Activated T-helper 1 cell treated with anti-CD3 and anti-CD28 coated beads, Interleukin-12 subunit alpha, Interleukin-12 subunit beta, Interleukin-2, Interleukin-4 antibody, amounts not matched to agents 30 ng/mL and 10 ng/mL and 1 ng/mL, durations not matched to agents 14 hours and 24 hours and 36 hours (primary cell): ENCODE measurements at regions of chr13 and their contacts with region 1.

Region 1: DNA sequence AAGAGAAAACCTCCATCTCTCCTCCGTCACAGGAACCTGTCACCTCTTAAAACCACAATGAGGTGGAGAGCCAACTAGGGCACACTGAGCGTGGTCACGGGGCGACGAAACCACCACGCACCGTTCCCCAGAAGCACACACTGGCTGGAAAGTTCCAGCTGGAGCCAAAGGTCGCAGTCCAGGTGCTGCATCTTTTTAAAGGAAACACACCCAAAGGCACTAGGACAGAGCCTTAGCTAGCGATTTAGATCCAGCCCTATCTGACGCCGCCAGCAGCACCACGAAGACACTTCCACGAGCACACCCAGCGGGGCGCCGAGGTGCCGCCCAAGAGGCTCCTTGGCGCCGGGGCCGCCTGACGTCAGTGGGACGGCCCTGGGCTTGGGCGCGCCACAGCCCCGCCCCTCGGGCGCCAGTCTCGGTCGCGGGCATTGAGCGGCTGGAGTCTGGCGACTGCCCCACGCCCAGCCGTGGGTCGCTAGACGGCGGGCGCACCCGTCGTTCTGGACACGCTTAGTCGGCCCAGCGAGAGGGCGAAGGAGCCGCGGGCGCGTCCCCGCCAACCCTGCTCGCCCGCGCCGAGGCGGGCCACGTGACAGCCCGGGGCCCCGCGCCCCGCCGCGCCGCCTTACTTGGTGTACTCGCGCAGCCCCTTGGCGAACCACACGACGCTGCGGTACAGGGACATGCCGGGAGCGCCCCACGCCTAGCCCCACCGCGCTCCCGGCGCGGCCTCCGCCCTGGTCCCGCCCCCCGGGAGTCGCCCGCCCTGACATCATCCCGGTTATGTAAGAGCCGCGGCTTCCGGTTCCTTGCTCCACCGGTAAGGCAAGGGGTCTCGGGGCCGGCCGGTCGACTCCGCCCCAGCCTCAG is at the start of gene DHRS12:
- DNase-seq: peak; percentile 79
- H3K4me3 Mint-ChIP-seq: peak within 1 kb of the TSS; percentile 90
- H3K27ac Mint-ChIP-seq: peak within 1 kb of the TSS; percentile 99
- H3K4me1 Mint-ChIP-seq: peaks cover 49% of the 10 kb centered on the region
- H3K27me3 Mint-ChIP-seq: no peaks in the 10 kb centered on the region
- total RNA-seq, gene DHRS12: 3.3 and 3.5 TPM in 2 replicates

Region 2: DNA sequence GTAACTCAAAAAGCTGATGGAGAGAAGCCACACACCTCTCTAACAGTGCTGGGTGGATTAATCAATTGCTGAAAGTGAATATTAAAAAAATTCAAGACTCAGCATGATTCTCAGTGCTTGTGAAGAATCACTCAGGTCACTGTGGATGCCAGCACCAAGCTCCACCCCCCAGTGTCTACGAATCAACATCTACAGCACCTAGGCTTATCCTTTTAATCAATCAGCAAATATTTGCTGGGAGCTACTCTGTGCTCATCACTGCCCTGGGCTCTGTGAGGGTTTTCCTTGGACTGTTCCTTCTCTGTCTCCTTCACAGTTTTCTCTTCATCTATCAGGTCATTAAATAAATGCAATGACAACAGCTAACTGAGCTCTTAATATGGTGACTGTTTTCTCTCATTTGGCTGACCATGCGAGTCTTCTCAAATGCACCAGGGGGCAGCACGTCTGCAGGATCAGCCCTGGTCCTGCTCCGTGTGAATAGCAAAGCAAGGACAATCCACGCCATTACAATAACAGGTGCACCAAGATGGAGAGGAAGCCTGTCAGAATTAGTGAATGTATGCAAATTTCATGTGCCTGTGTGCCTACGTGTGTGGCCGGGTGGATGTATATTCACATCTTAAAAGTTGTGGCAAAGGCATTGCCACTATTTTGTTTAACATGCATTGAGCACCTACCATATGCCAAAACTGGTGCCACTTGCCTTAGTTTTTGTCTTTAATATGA is 678.0 kb before region 1 on chr13:
- intact Hi-C with region 1: loop called (anchors 1 kb)
- DNase-seq: peak; percentile 25
- H3K4me3 Mint-ChIP-seq: no peak overlapping the region
- H3K27ac Mint-ChIP-seq: no peak overlapping the region
- H3K4me1 Mint-ChIP-seq: peaks cover 12% of the 10 kb centered on the region
- H3K27me3 Mint-ChIP-seq: peaks cover 9% of the 10 kb centered on the region

Region 3: DNA sequence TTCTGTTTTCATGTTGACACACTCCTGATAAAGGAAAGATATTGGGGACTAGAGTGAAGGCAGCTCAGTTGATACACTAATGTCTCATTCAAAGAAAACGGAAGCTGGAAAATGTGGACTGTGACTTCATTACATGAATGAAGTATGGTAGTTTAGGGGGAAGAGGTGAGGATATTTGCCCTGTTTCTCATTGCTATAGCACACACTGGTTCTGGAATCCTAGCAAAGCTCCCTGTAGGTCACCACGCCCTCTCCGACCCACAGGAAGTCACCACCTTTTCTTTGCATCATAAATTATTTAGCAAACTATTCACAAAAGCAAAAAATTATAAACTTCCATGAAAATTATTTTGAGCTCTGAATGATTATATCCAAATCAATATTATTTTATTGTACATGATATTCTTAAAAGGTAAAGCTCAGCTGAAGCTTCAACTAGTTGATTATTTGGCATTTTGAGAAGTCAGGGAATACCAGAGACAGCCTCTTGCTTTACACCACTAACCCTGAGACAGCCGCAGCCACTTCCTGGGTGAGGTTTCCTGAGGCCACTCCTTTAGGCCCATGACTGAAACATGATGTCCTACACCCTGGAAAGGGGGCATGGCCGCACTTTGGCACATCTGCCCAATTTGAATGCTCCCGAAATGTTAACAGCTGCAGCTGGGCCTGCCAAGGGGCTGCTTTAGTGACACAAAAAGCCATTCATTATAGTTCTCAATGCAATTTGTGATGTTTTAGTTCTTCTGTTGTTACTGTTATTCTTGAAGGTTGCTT is 269.4 kb before region 1 on chr13:
- intact Hi-C with region 1: loop called (anchors 5 kb)
- DNase-seq: peak; percentile 46
- H3K4me3 Mint-ChIP-seq: peak overlapping the region; percentile 26
- H3K27ac Mint-ChIP-seq: peak overlapping the region; percentile 70
- H3K4me1 Mint-ChIP-seq: peaks cover 50% of the 10 kb centered on the region
- H3K27me3 Mint-ChIP-seq: no peaks in the 10 kb centered on the region

Region 4: GRCh38 chr13:51737609-51738008 is 66.0 kb before region 1 on chr13:
- intact Hi-C with region 1: loop called (anchors 2 kb)
- DNase-seq: no peak
- H3K4me3 Mint-ChIP-seq: peak overlapping the region; percentile 49
- H3K27ac Mint-ChIP-seq: peak overlapping the region; percentile 67
- H3K4me1 Mint-ChIP-seq: peaks cover 43% of the 10 kb centered on the region
- H3K27me3 Mint-ChIP-seq: no peaks in the 10 kb centered on the region

Region 5: DNA sequence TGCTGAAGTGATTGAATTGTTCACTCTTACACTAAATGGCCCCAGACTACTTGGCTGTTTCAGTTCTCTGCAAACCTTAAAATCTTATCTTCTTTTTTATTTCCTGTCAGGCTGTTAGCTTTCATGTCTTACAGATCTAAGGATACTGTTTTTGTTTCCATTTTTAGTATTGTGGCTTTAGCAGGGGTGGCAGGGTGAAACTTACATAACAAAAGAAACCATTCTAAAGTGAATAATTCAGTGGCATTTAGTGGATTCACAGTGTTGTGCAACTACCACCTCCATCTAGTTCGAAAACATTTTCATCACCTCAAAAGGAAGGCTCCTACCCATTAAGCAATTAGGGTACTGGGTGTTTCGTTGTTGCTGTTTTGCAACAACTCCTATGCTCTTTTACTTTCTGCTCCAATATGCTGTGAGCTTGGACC is 21.5 kb after region 1 on chr13:
- intact Hi-C with region 1: loop called (anchors 1 kb)
- DNase-seq: no peak
- H3K4me3 Mint-ChIP-seq: peak overlapping the region; percentile 8
- H3K27ac Mint-ChIP-seq: peak overlapping the region; percentile 71
- H3K4me1 Mint-ChIP-seq: peaks cover 84% of the 10 kb centered on the region
- H3K27me3 Mint-ChIP-seq: peaks cover 4% of the 10 kb centered on the region

Region 6: DNA sequence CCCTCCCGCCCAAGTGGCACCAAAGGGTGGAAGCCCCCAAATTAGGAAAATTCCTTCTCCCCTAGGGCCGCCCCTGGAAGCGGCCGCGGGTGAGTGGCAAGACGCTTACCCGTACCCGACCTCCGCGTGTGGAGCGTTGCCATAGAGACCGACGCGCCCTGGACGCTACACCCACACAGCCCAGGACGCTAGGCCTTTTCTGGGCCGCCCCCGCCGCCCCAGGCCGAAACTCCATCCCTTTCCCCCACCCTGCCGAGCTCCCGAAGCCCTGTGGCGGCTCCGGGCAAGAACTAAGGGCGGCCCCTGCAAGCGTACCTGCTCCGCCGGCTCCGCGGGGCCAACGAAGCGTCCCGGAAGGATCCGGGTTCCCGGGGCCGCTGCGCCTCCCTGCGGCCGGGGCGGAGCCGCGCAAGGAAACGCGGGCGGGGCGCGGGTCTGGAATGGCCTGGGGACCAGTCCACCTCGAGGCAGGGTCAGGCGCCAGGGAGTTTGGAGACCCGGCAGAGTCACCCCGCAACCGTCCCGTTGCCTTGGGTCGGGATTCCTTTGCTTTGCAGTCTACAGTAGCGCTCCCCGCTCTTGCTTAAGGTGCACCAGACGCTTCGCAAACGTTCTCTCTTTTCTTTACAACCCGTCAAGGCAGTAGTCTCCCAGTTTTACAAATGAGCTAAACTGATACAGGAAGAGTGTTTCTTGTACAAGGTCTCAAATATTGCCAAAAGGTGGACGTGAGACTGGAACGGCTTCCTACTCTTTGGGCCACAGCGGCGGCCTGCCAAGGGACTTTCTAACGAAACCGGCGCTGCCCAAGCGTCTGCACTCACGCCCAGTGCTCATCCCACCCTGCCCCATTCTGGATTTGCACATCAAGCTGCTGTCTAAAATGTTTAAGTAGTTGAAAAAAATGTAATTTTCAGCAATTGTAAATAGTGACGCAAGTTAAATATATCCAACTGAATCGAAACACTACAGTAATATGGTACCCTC is 325.3 kb after region 1 on chr13 and contains the start of gene NEK5:
- intact Hi-C with region 1: loop called (anchors 2 kb)
- DNase-seq: peak; percentile 52
- H3K4me3 Mint-ChIP-seq: peak within 1 kb of the TSS; percentile 77
- H3K27ac Mint-ChIP-seq: no peak within 1 kb of the TSS
- H3K4me1 Mint-ChIP-seq: peaks cover 14% of the 10 kb centered on the region
- H3K27me3 Mint-ChIP-seq: peaks cover 8% of the 10 kb centered on the region
- total RNA-seq, gene NEK5: not detected in 2 replicates

Region 7: GRCh38 chr13:52414963-52415362 is 611.3 kb after region 1 on chr13:
- intact Hi-C with region 1: no loop called
- DNase-seq: no peak
- H3K4me3 Mint-ChIP-seq: no peak overlapping the region
- H3K27ac Mint-ChIP-seq: no peak overlapping the region
- H3K4me1 Mint-ChIP-seq: peaks cover 12% of the 10 kb centered on the region
- H3K27me3 Mint-ChIP-seq: no peaks in the 10 kb centered on the region